ENCODE measurements at regions of chr3 and their contacts with region 1.

Region 1: DNA sequence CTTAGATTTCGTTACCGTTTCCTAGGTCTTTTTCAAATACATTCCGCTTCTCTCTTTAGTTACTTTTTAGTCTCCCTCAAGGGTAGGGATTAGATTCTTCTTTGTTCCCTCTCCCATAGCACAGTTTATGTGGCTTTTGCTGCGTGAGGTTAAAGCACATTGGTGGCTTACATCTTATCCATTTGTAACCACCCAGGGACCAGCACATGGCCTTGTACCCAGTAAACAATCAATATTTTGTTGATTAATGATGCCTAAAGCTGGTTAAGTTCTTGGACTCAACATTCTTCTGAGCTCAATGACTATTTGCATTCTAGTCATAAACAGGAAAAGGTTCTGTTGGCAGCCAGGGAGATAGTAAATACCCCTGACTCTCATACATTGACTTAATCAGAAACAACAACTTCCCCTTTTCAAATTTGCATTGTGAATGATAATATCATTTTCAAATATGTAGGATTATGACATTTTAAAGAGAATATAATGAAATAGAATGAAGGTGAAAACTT is 60.2 kb downstream of the CACNA1D start:
- DNase-seq: no peak
- H3K4me3 ChIP-seq: no peak overlapping the region
- H3K27ac ChIP-seq: no peak overlapping the region
- H3K4me1 ChIP-seq: peaks cover 0 to 20% (median 12%) of the 10 kb centered on the region in 4 donors
- H3K27me3 ChIP-seq: no peaks in the 10 kb centered on the region
- CTCF ChIP-seq: no peak
- EP300 ChIP-seq: no peak
- POLR2A ChIP-seq: no peak

Region 2: GRCh38 chr3:53502737-53503136 is 51.9 kb before region 1 on chr3:
- intact Hi-C with region 1: loop called (anchors 5 kb)
- DNase-seq: no peak
- H3K4me3 ChIP-seq: no peak overlapping the region
- H3K27ac ChIP-seq: no peak overlapping the region
- H3K4me1 ChIP-seq: peaks cover 0 to 23% (median 17%) of the 10 kb centered on the region in 4 donors
- H3K27me3 ChIP-seq: no peaks in the 10 kb centered on the region
- CTCF ChIP-seq: no peak
- EP300 ChIP-seq: no peak
- POLR2A ChIP-seq: no peak

Measured in sigmoid colon (tissue), 7 donors.